ENCODE measurements at regions of chr16 and their contacts with region 1.

Region 1: DNA sequence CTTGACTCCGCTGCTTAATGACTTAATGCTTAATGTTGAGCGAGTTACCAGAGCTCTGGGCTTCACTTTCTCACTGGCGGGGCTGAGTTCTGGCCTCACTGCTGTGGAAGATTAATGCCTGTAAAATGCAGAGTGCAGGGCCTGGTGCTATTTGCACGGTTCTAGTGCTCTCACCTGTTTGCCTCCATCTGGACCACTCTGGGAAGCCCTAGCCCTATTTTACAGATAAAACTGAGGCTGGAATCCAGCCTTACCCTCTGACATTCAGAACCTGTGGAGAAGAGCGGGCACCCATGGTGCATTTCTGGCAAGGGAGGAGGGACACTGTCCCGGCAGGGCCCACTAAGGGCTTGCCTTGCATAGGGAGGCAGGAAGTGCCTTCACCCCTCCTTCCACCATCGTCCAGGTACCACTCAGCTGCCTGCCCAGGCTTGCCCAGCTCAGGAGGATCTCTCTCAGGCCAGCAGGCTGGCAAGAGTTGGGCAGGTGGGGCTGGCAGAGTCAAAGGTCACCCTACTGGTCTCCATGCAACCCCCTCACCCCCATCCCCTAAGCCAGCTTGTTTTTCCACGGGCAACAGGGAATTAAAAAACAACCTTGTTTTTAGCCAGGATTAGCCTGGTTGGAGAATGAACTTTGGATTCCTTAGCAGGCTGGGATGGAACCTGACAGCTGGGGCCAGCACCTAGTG is 4.1 kb upstream of the UBALD1 start:
- DNase-seq: peak in 1 of 2 donors; percentile 66
- H3K4me3 ChIP-seq: peak overlapping the region in 1 of 3 donors; percentile 91
- H3K27ac ChIP-seq: peak overlapping the region; percentile 97 to 98
- H3K4me1 ChIP-seq: peaks cover 8 to 9% of the 10 kb centered on the region in 2 donors
- H3K27me3 ChIP-seq: no peaks in the 10 kb centered on the region
- CTCF ChIP-seq: no peak
- POLR2A ChIP-seq: no peak

Region 2: DNA sequence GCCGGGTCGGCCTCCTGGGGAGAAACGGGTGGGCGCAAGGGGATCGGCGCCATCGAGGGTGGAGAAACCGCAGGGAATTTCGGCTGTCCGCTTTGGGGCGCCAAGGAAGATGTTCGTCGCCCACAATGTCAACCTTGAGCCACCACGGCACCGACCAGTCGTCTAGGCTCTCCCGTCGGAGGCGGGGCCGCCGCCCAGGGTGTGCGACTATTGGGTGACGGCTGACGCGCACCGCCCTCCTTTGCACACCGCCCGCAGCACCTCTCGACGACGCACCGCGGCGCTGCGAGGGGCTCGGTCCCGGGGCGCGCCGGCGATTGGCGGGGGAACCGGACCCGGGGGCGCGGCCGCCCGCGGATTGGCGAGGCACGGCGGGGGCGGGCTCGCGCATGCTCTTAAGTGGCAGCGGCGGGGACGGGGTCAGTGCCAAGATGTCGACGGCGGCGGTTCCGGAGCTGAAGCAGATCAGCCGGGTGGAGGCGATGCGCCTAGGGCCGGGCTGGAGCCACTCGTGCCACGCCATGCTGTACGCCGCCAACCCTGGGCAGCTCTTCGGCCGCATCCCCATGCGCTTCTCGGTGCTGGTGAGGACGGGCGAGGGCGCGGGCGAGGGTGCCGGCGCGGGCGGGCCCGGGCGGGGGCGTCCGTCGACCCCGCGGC is 74.6 kb after region 1 on chr16 and contains the start of gene NUDT16L1:
- intact Hi-C with region 1: loop called (anchors 2 kb)
- DNase-seq: peak; percentile 96
- H3K4me3 ChIP-seq: peak within 1 kb of the TSS; percentile 78 to 100 (median 81)
- H3K27ac ChIP-seq: peak within 1 kb of the TSS; percentile 82 to 96
- H3K4me1 ChIP-seq: peaks cover 13 to 20% of the 10 kb centered on the region in 2 donors
- H3K27me3 ChIP-seq: no peaks in the 10 kb centered on the region
- CTCF ChIP-seq: no peak
- POLR2A ChIP-seq: peak; percentile 44
- total RNA-seq, gene NUDT16L1: 22.4 to 38.0 (median 32.3) TPM

Measured in breast epithelium (tissue), 4 donors.